ENCODE measurements at regions of chr3 and their contacts with region 1.

Region 1: DNA sequence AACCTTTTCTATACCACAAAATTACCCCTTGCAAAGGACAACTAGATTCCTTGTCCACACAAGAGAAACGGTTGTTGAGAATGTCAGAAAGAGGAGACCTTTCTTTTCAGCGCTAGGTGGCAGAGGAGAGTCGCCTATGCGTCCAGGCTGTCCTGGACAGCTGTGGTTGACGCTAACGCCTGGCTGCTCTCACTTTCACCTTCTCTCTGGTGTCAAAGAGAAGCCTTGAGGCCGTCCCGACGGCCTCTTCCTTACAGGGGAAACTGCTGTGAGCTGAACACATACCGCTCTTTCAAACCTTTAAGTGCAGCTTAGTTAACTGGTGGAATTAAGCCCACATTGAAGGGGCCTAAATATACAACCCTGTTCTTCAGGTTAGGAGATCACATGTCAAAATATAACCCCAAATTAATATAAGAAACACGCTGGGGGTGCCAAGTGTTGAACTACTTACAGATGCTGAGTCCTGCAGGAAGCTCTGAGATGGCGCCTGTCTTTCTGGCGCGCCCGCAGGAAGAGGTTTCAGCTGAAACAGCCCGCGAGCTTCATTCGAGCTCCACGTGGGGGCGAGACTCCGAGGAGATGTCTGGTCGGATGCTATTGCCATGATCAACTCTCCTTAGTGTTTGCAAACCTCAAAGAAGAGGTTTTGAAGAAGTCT is 26.1 kb upstream of the KBTBD8 start:
- DNase-seq: peak; percentile 70
- H3K4me3 Mint-ChIP-seq: no peak overlapping the region
- H3K27ac Mint-ChIP-seq: no peak overlapping the region
- H3K4me1 Mint-ChIP-seq: no peaks in the 10 kb centered on the region
- H3K27me3 Mint-ChIP-seq: peaks cover 43% of the 10 kb centered on the region
- CTCF ChIP-seq: peak; percentile 76

Region 2: GRCh38 chr3:65979162-65979561 is 992.9 kb before region 1 on chr3:
- CTCF ChIA-PET with region 1: no interaction called
- POLR2A ChIA-PET with region 1: no interaction called
- intact Hi-C with region 1: no loop called
- DNase-seq: no peak
- H3K4me3 Mint-ChIP-seq: no peak overlapping the region
- H3K27ac Mint-ChIP-seq: no peak overlapping the region
- H3K4me1 Mint-ChIP-seq: no peaks in the 10 kb centered on the region
- H3K27me3 Mint-ChIP-seq: no peaks in the 10 kb centered on the region
- CTCF ChIP-seq: no peak

Region 3: DNA sequence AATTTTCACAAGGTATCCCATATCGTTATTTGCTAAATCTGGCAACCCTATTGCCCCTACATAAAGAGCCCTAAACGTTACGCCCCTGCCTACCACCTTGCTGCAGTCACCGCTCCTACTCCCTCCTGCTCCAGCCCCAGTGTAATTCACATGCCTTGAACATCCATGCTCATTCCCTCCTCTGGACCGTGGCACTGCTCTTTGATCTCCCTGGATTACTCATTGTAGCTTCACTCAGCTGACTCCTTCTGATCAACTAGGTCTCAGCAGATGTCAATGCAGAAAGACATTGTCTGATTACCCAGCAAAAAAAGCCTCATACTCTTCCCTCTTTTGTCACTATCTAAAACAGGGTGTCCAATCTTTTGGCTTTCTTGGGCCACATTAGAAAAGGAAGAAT is 14.7 kb before region 1 on chr3:
- CTCF ChIA-PET with region 1: interaction called, 14 read pairs
- POLR2A ChIA-PET with region 1: no interaction called
- intact Hi-C with region 1: no loop called
- DNase-seq: no peak
- H3K4me3 Mint-ChIP-seq: no peak overlapping the region
- H3K27ac Mint-ChIP-seq: no peak overlapping the region
- H3K4me1 Mint-ChIP-seq: no peaks in the 10 kb centered on the region
- H3K27me3 Mint-ChIP-seq: peaks cover 86% of the 10 kb centered on the region
- CTCF ChIP-seq: no peak

Region 4: DNA sequence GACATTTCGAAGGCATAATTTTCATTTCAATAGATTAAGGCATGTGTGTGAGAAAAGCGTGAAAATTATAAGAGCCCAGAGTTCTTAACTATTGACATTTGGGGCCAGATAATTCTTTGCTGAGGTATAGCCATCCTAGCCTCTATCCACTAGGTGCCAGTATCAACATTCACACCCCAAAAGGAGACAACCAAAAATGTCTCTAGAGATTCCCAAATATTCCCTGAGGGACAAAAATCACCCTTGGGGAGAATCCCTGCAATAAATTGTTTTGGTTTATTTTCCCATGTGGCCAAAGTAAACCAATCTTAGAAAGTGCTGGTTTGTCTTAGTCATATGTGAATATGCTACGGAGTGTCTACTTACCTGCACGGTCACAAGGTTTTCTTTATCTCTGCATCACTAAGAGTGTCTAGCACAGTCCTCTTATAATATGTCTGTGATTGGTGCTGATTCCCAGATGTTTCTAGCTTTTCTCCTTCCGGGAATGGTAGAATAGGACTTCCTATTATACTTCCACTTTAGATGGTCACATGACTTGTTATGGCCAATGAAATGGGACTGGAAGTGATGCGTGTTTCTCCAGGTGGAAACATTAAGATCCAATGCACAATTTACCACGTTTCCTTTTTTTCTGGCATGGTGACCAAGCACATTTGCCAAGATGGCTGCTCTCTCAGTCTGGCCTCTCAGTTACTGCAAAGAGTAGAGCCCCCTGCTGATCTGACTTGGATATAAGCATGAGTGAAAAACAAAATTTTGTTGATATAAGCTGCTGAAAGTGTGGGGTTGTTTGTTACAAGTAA is 18.0 kb after region 1 on chr3:
- CTCF ChIA-PET with region 1: interaction called, 45 read pairs
- POLR2A ChIA-PET with region 1: no interaction called
- intact Hi-C with region 1: no loop called
- DNase-seq: peak; percentile 22
- H3K4me3 Mint-ChIP-seq: no peak overlapping the region
- H3K27ac Mint-ChIP-seq: no peak overlapping the region
- H3K4me1 Mint-ChIP-seq: no peaks in the 10 kb centered on the region
- H3K27me3 Mint-ChIP-seq: peaks cover 26% of the 10 kb centered on the region
- CTCF ChIP-seq: peak; percentile 13

Region 5: GRCh38 chr3:67044955-67045354 is 72.9 kb after region 1 on chr3:
- CTCF ChIA-PET with region 1: interaction called, 74 read pairs
- POLR2A ChIA-PET with region 1: interaction called, 3 read pairs
- intact Hi-C with region 1: no loop called
- DNase-seq: no peak
- H3K4me3 Mint-ChIP-seq: no peak overlapping the region
- H3K27ac Mint-ChIP-seq: no peak overlapping the region
- H3K4me1 Mint-ChIP-seq: no peaks in the 10 kb centered on the region
- H3K27me3 Mint-ChIP-seq: peaks cover 23% of the 10 kb centered on the region
- CTCF ChIP-seq: no peak

Region 6: DNA sequence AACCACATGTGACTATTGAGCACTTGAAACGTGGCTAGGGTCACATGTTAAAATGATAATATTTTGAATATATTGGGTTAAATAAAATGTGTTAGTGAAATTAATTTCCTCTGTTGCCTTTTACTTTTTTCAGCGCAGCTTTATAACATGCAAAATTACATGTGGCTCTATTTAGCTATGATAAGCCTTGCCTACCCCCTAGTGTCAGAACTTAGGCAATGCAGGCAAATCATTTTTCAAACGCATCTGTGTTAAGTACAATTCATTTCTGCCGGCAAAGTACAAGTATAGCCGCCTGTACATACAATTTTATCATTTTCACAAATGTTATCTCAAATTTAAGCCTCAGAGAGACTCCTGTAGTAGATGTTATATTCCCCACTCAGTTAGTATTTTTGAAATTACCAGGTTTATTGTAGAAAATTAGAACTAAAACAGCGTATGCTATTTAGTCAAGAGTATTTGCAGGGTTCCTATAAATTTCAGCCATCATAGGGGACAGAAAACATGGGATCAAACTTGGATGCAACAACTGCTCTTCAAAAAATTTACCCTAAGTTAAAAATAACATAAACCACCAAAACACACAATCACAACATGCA is 1904.2 kb after region 1 on chr3:
- CTCF ChIA-PET with region 1: interaction called, 6 read pairs
- POLR2A ChIA-PET with region 1: no interaction called
- intact Hi-C with region 1: loop called (anchors 10 kb)
- DNase-seq: peak; percentile 74
- H3K4me3 Mint-ChIP-seq: no peak overlapping the region
- H3K27ac Mint-ChIP-seq: no peak overlapping the region
- H3K4me1 Mint-ChIP-seq: no peaks in the 10 kb centered on the region
- H3K27me3 Mint-ChIP-seq: peaks cover 76% of the 10 kb centered on the region
- CTCF ChIP-seq: peak; percentile 77

Measured in MCF 10A (cell line).